ENCODE measurements at regions of chr5 and their contacts with region 1.

Region 1: DNA sequence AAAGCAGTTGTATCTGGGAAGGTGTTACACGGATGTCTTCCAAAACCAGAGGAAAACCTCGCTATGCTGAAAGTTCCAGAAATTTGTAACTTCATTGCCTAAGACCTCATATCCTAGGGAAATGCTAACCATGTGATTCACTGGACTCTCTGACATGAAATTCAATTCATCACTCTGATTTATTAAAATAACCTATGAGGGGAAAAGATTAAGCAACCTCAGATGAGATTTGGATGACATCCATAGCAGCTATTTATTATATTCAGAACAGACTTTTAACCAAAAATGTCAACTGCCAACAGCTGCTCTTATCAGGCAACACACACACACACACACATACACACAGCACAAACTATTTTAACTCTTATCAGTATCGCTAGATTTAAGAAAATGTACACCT is 1006.4 kb upstream of the CTNND2 start:
- DNase-seq: no peak
- ATAC-seq: no peak
- H3K4me3 ChIP-seq: no peak overlapping the region
- H3K27ac ChIP-seq: no peak overlapping the region
- H3K4me1 ChIP-seq: no peaks in the 10 kb centered on the region
- H3K27me3 ChIP-seq: no peaks in the 10 kb centered on the region
- CTCF ChIP-seq: no peak

Region 2: DNA sequence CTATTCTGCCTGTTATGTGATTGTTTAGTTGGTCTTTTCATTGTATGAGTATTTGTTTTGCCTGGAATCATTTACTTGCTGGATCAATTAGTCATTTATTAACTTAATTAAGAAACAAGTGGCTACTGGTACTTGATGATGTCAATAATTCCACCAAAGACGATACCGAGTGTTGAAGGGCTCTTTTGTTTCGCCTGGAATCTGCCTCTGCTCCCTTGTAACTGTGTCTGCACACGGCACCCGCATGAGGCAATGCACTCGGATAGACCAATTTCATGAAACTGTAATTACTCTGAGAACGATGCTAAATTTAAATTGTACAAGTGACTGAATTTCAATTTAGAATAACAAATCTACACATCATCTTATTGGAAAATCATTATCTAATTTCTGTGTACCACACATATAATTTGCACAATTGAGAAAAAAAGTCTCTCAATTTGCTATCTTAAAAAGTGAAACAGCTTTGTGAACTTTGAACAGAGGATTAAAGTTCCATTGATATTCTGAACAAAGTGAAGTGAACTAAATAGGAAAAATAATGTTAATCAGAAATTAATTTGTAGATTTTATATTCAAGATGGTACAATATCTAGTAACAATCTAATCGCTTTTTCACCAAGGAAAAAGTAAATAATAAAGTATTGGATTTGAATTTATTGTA is 1149.6 kb before region 1 on chr5:
- intact Hi-C with region 1: loop called in 1 of 10 experiments (anchors 5 kb)
- DNase-seq: no peak
- ATAC-seq: no peak
- H3K4me3 ChIP-seq: no peak overlapping the region
- H3K27ac ChIP-seq: no peak overlapping the region
- H3K4me1 ChIP-seq: no peaks in the 10 kb centered on the region
- H3K27me3 ChIP-seq: no peaks in the 10 kb centered on the region
- CTCF ChIP-seq: no peak

Region 3: DNA sequence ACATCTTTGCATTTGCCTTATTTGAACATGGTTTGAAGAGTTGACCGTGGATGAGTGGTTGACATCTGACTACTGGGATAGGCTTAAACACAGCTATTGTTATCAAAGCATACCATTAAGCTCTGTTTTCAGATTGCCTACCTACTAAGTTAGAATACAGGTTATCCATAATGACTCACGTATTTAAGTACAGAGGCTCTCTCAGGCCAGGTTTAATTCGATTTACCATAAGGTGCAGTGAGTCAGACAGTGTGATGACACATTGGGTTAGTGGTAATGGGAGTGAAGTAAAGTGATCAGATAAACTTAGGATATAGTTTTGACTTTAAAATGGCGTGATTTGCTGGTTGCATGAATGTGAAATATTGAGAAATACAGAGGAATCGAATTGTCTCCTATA is 274.4 kb before region 1 on chr5:
- intact Hi-C with region 1: no loop called
- DNase-seq: no peak
- ATAC-seq: no peak
- H3K4me3 ChIP-seq: no peak overlapping the region
- H3K27ac ChIP-seq: no peak overlapping the region
- H3K4me1 ChIP-seq: no peaks in the 10 kb centered on the region
- H3K27me3 ChIP-seq: no peaks in the 10 kb centered on the region
- CTCF ChIP-seq: no peak

Measured in heart right ventricle (tissue), 16 donors.